ENCODE measurements at regions of chr1 and their contacts with region 1.

Region 1: GRCh38 chr1:209747580-209748262 is 8.1 kb upstream of the TRAF3IP3 start:
- DNase-seq: peak; percentile 93
- ATAC-seq: peak; percentile 96

Region 2: DNA sequence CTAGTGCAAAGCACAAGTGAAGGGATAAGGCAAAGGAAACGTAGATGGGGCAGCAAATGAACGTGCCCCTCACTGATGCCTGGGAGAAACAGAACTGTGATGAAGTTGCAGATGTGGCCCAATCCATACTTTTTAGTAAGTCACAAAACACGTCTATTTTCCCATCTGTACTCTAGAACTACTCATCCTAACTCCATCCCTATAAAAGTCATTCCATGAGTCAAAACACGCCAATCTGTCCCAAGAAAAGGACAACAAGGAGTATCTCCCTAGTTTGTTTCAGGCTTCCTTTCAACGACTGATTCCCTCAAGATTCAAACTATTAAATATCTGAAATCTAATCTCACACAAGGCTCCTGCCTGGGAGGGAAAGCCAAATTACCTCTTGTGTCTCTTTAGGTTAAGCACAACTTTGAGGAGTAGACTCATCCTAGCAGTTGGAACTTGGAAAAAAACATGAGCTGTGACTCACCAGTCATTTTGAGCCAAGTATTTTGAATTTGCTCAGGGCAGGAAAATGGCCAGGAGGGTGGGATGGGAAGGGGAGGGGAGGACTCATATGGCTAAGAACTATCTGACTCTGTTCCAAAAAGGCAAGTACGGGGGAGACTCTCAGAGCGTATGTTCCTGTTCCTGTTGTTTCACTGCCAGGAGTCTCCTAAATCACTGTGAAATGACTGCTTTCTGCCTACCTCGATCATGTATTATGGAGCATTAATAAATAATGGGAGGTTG is 378.7 kb before region 1 on chr1:
- intact Hi-C with region 1: no loop called
- DNase-seq: no peak
- ATAC-seq: peak; percentile 92

Region 3: GRCh38 chr1:209590405-209590804 is 157.3 kb before region 1 on chr1:
- intact Hi-C with region 1: loop called (anchors 5 kb)
- DNase-seq: no peak
- ATAC-seq: peak; percentile 42

Region 4: DNA sequence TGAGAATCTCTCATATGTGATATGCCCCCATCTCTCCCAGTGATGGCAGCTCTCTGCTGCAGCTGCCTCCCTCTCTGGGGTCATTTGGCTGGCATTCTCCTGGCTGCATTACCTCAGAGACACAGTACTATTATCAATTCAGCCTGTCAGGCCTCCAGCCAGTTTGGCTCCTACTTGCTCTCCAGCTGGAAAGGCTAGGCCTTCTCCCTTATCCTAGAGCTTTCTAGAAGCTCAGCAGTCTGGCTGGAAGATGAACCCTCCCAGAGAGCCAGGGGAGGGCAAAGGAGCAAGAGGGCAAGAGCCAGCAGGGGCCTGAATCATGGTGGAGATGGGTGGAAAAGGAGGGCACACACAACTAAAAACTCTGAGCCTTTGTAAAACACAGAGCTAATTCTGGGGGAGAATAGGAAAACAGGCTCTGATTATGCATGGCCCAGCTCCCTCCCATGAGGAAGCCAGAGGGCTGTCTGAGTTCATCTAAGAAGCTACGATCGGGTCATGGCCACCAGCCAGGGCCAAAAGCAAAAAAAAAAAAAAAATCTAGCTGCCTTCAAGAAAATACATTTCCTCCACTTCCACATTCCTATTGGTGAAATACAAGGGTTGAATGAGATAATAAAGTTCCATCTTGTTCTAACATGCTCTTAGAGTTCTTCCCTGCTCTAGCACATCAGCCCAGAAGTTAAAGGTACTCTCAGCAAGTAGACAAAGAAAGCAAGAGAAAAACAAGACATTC is 104.3 kb before region 1 on chr1:
- intact Hi-C with region 1: loop called (anchors 2 kb)
- DNase-seq: peak; percentile 82
- ATAC-seq: peak; percentile 79

Region 5: DNA sequence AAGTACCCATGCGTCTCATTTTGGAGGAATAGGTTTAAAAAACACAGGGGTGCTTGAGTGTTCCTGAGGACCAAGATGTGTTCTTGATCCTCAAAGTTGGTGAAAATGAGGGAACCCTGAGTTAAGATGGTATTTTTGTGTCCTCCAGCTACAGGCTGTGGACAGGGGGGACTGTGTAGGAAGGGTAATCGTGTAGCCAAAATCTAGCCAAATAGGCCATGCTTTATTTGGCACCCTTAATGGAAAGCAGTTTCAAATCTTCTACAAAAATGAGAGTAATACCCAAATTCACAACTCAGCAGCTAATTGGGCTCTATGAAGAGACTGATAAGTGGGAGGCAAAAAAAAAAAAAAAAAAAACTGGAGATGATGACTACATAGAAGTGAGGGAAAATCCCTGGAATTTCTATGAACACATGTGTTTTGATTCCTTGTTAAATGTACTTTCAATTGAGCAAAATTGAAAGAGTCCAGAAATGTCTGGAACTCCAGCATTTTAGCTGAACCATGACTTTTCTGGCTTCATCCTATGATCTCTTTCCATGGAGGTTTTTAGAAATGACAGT is 42.6 kb before region 1 on chr1:
- intact Hi-C with region 1: loop called (anchors 5 kb)
- DNase-seq: no peak
- ATAC-seq: peak; percentile 56

Region 6: GRCh38 chr1:209805875-209806760 is 58.4 kb after region 1 on chr1 and contains the start of gene IRF6:
- intact Hi-C with region 1: no loop called
- DNase-seq: peak; percentile 93
- ATAC-seq: peak; percentile 70
- total RNA-seq, gene IRF6: 29.7 TPM

Measured in Right ventricle myocardium inferior (tissue), 1 donor.